ENCODE measurements at regions of chr15 and their contacts with region 1.

Region 1: GRCh38 chr15:40367686-40368611 is 9.9 kb downstream of the DISP2 start:
- DNase-seq: peak; percentile 90
- H3K4me3 Mint-ChIP-seq: peak overlapping the region; percentile 64
- H3K27ac Mint-ChIP-seq: peak overlapping the region; percentile 91
- H3K4me1 Mint-ChIP-seq: peaks cover 6% of the 10 kb centered on the region
- H3K27me3 Mint-ChIP-seq: no peaks in the 10 kb centered on the region
- CTCF ChIP-seq: peak; percentile 78

Region 2: GRCh38 chr15:40307421-40308211 is 60.3 kb before region 1 on chr15 and contains the start of gene PLCB2:
- CTCF ChIA-PET with region 1: interaction called, 13 read pairs
- POLR2A ChIA-PET with region 1: no interaction called
- intact Hi-C with region 1: no loop called
- DNase-seq: no peak
- H3K4me3 Mint-ChIP-seq: no peak within 1 kb of the TSS
- H3K27ac Mint-ChIP-seq: no peak within 1 kb of the TSS
- H3K4me1 Mint-ChIP-seq: no peaks in the 10 kb centered on the region
- H3K27me3 Mint-ChIP-seq: peaks cover 13% of the 10 kb centered on the region
- CTCF ChIP-seq: no peak
- total RNA-seq, gene PLCB2: 0.15 and 0.84 TPM in 2 replicates

Region 3: DNA sequence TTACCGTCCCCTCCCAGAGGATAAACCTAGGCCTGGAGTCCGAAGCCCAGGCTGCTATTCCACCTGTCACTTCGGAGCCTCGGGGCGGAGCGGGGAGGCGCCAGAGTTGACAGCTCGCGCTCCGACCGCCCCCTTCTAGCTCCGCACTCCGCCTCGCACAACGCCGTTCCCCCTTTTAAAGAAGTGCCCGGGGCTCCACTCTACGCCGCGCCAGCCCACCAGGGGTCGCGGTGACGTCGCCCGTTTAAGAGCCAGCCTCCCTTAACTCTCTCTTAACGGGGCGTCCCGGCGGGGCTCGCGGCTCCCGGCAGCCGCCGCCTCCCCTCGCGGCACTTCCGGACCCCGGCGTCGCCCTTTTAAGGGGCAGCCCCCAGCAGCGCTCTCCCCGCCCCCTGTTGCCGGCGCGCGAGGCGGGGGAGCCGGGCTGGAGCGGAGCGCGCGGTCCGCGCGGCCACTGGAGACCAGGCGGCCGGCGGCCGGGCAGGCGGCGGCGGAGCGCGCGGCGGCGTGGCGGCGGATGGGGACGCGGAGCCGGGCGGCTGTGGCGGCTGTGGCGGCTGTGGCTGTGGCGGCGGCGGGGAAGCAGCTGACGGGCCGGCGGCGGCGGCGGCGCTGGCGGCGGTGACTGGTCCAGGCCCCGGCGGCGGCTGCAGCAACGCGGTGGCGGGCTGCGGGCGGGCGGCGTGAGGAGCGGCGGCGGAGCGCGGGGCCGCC is 44.6 kb before region 1 on chr15 and contains the start of gene INAFM2:
- CTCF ChIA-PET with region 1: interaction called, 17 read pairs
- POLR2A ChIA-PET with region 1: interaction called, 7 read pairs
- intact Hi-C with region 1: loop called (anchors 1 kb)
- DNase-seq: peak; percentile 89
- H3K4me3 Mint-ChIP-seq: peak within 1 kb of the TSS; percentile 69
- H3K27ac Mint-ChIP-seq: no peak within 1 kb of the TSS
- H3K4me1 Mint-ChIP-seq: peaks cover 30% of the 10 kb centered on the region
- H3K27me3 Mint-ChIP-seq: no peaks in the 10 kb centered on the region
- CTCF ChIP-seq: peak; percentile 32
- total RNA-seq, gene INAFM2: 14.9 and 15.7 TPM in 2 replicates

Region 4: GRCh38 chr15:40344631-40345120 is 23.3 kb before region 1 on chr15:
- CTCF ChIA-PET with region 1: interaction called, 112 read pairs
- POLR2A ChIA-PET with region 1: interaction called, 6 read pairs
- intact Hi-C with region 1: loop called (anchors 1 kb)
- DNase-seq: peak; percentile 73
- H3K4me3 Mint-ChIP-seq: no peak overlapping the region
- H3K27ac Mint-ChIP-seq: no peak overlapping the region
- H3K4me1 Mint-ChIP-seq: peaks cover 40% of the 10 kb centered on the region
- H3K27me3 Mint-ChIP-seq: no peaks in the 10 kb centered on the region
- CTCF ChIP-seq: peak; percentile 83

Region 5: DNA sequence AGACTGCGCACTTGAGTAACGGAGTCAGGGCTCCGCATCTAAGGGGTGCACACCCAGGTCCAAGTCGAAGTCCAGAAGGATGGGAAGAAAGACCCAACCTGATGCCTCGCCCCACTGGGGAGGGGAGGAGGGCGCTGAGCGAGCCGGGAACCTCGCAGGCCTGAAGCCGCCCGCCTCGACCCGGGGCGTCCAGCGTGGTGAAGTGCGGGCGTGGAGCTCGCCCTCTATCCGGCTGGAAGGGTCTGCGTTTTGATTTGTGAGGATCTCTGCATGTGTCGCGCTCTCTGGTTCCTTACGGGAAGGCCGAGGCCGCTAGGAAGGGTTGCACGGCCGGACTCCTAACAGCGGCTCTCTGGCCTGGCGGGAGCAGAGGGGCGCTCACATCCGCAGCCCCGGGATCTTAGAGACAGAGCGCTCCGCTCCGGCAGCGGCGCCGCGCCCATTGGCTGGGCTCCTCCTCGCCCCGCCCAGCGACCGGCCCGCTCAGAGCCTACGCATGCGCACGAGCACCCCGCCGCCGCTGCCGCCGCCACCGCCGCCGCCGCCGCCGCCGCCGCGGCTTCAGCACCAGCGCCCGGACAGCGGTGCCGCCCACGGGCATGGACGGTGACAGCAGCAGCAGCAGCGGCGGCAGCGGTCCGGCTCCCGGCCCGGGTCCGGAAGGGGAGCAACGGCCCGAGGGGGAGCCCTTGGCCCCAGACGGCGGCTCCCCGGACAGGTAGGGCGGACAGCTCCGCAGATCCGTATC is 10.1 kb before region 1 on chr15 and contains the start of gene DISP2:
- CTCF ChIA-PET with region 1: interaction called, 38 read pairs
- POLR2A ChIA-PET with region 1: interaction called, 4 read pairs
- intact Hi-C with region 1: no loop called
- DNase-seq: peak; percentile 71
- H3K4me3 Mint-ChIP-seq: peak within 1 kb of the TSS; percentile 73
- H3K27ac Mint-ChIP-seq: no peak within 1 kb of the TSS
- H3K4me1 Mint-ChIP-seq: no peaks in the 10 kb centered on the region
- H3K27me3 Mint-ChIP-seq: no peaks in the 10 kb centered on the region
- CTCF ChIP-seq: no peak
- total RNA-seq, gene DISP2: 1.8 and 2.1 TPM in 2 replicates

Region 6: GRCh38 chr15:40388946-40389841 is 21.2 kb after region 1 on chr15:
- CTCF ChIA-PET with region 1: interaction called, 25 read pairs
- POLR2A ChIA-PET with region 1: interaction called, 4 read pairs
- intact Hi-C with region 1: no loop called
- DNase-seq: peak; percentile 96
- H3K4me3 Mint-ChIP-seq: no peak overlapping the region
- H3K27ac Mint-ChIP-seq: peak overlapping the region; percentile 49
- H3K4me1 Mint-ChIP-seq: peaks cover 21% of the 10 kb centered on the region
- H3K27me3 Mint-ChIP-seq: no peaks in the 10 kb centered on the region
- CTCF ChIP-seq: no peak

Region 7: GRCh38 chr15:40421246-40422157 is 53.6 kb after region 1 on chr15:
- CTCF ChIA-PET with region 1: interaction called, 80 read pairs
- POLR2A ChIA-PET with region 1: no interaction called
- intact Hi-C with region 1: loop called (anchors 1 kb)
- DNase-seq: peak; percentile 68
- H3K4me3 Mint-ChIP-seq: peak overlapping the region; percentile 14
- H3K27ac Mint-ChIP-seq: peak overlapping the region; percentile 73
- H3K4me1 Mint-ChIP-seq: peaks cover 19% of the 10 kb centered on the region
- H3K27me3 Mint-ChIP-seq: no peaks in the 10 kb centered on the region
- CTCF ChIP-seq: peak; percentile 92

Region 8: DNA sequence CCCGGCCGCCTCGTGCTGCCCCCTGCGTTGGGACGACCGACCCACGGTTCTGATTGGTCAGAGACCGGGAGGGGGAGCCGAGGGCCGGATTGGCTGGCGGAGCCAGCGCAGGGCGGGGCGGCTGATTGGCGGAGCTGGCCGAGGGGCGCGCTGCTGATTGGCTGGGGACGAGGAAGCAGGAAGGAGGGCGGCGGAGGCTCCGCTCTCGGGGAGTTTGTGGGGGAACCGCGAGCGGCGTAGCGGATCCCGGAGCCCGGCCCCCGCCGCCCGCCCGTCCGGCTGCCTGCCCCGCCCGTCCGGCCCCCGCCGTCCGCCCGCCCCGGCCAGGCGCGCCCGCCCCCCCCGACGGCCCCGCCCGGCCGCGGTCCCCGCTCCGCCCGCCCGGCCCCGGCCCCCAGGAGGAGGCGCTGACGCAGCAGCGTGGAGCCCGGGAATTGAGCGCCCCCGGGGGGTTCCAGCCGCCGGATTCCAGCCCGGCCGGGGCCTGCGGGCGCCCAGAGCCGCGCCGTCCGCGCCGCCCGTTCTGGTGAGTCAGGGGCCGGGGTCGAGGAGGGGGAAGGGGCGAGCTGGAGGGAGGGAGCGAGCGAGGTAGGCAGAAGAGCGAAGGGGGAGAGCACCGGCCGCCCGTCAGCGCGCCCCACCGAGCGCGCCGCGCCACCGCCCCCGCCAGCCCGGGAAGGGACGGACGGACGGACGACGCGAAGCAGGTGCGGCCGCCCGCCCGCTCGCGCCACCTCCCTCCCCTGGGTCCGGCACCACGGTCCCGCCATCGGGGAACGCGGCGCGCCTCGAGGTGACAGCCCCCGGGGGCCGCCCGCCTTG is 73.0 kb after region 1 on chr15 and contains the start of gene BAHD1:
- CTCF ChIA-PET with region 1: no interaction called
- POLR2A ChIA-PET with region 1: no interaction called
- intact Hi-C with region 1: no loop called
- DNase-seq: peak; percentile 91
- H3K4me3 Mint-ChIP-seq: peak within 1 kb of the TSS; percentile 89
- H3K27ac Mint-ChIP-seq: peak within 1 kb of the TSS; percentile 70
- H3K4me1 Mint-ChIP-seq: peaks cover 38% of the 10 kb centered on the region
- H3K27me3 Mint-ChIP-seq: peaks cover 7% of the 10 kb centered on the region
- CTCF ChIP-seq: no peak
- total RNA-seq, gene BAHD1: 14.9 and 15.1 TPM in 2 replicates

Measured in MCF 10A (cell line).